ENCODE measurements at regions of chr19 and their contacts with region 1.

Region 1: DNA sequence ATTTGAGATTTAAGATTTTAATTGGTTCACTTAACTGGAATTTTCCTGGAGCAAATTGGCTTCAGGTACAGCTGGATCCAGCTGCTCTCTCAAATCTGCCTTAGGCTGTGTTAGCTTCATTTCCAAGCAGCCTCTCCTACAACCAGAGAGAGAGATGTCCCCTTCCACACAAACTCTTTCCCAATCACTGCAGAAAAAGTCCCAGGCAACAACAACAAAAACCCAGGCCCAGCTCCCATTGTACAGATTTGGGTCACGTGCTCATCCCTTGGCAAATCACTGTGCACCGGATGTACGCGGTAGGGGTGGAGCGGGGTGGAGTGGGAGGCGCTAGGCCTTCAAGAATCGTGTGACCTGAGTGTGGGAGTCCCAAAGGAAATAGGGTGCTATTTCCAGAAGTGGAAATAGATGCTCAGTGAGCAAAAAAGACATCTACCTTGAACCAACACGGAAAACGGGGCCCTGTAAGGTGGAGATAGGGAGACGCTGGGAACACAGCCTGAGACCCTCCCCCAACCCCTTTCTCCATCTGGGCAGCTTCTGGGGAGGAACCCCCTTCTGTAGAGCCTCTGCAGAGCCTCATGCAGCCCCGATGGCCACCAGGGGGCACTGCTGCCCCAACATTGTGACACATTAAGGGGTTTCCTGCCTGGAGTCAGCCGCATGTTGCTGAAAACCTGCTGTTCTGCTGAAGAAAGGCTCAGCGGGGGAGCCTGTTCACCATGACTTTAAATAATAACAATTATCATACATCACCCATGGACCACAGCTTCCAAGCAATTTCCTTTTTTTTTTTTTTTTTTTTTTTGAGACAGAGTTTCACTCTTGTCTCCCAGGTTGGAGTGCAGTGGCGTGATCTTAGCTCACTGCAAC is 25.4 kb downstream of the HPN start:
- DNase-seq: peak; percentile 89
- H3K4me3 ChIP-seq: no peak overlapping the region
- H3K27ac ChIP-seq: no peak overlapping the region
- H3K4me1 ChIP-seq: no peaks in the 10 kb centered on the region
- H3K27me3 ChIP-seq: no peaks in the 10 kb centered on the region
- CTCF ChIP-seq: peak; percentile 51 to 71 (median 66)
- EP300 ChIP-seq: no peak
- POLR2A ChIP-seq: no peak

Region 2: DNA sequence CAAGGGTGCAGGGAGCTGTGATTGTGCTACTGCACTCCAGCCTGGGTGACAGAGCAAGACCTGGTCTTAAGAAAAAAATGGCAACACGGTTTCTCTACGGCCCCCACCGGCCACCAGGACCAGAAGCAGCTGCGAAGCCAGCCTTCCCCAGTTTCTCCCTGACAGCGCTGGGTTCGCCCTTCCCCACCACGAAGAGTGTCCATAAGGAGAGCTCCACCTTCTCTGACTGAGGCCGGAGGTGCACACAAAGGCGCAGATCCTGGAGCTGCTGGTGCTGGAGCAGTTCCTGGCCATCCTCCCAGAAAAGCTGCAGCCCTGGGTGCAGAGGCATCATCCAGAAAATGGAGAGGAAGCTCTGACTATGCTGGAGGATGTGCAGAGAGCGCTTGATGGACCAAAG is 241.7 kb before region 1 on chr19:
- intact Hi-C with region 1: no loop called
- DNase-seq: no peak
- H3K4me3 ChIP-seq: no peak overlapping the region
- H3K27ac ChIP-seq: no peak overlapping the region
- H3K4me1 ChIP-seq: no peaks in the 10 kb centered on the region
- H3K27me3 ChIP-seq: no peaks in the 10 kb centered on the region
- CTCF ChIP-seq: no peak
- EP300 ChIP-seq: no peak
- POLR2A ChIP-seq: no peak

Region 3: DNA sequence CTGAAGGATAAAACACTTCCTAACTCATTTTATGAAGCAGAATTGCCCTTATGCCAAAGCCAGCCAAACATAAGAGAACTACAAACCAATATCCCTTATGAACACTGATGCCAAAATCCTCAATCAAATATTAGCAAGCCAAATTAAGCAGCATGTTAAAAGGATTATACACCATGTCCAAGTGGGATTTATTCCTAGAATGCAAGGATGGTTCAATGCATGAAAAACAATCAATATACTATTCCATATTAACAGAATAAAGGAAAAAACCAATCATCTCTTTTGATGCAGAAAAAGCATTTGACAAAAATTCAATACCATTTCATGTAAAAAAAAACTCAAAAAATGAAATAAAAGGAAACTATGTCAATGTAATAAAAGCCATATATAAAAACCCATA is 113.8 kb before region 1 on chr19:
- intact Hi-C with region 1: no loop called
- DNase-seq: no peak
- H3K4me3 ChIP-seq: no peak overlapping the region
- H3K27ac ChIP-seq: no peak overlapping the region
- H3K4me1 ChIP-seq: no peaks in the 10 kb centered on the region
- H3K27me3 ChIP-seq: no peaks in the 10 kb centered on the region
- CTCF ChIP-seq: no peak
- EP300 ChIP-seq: no peak
- POLR2A ChIP-seq: no peak

Region 4: GRCh38 chr19:35090506-35091237 is 23.7 kb after region 1 on chr19:
- intact Hi-C with region 1: loop called (anchors 2 kb)
- DNase-seq: no peak
- H3K4me3 ChIP-seq: no peak overlapping the region
- H3K27ac ChIP-seq: no peak overlapping the region
- H3K4me1 ChIP-seq: peaks cover 0 to 11% (median 7%) of the 10 kb centered on the region in 4 donors
- H3K27me3 ChIP-seq: peaks cover 0 to 27% (median 23%) of the 10 kb centered on the region in 3 donors
- CTCF ChIP-seq: peak in 2 of 4 experiments; percentile 41 to 61
- EP300 ChIP-seq: no peak
- POLR2A ChIP-seq: no peak

Region 5: GRCh38 chr19:35162471-35163326 is 95.8 kb after region 1 on chr19:
- intact Hi-C with region 1: no loop called
- DNase-seq: peak; percentile 27
- H3K4me3 ChIP-seq: no peak overlapping the region
- H3K27ac ChIP-seq: no peak overlapping the region
- H3K4me1 ChIP-seq: no peaks in the 10 kb centered on the region
- H3K27me3 ChIP-seq: peaks cover 0 to 5% (median under 1%) of the 10 kb centered on the region in 3 donors
- CTCF ChIP-seq: no peak
- EP300 ChIP-seq: no peak
- POLR2A ChIP-seq: no peak

Region 6: GRCh38 chr19:35518313-35518712 is 451.4 kb after region 1 on chr19:
- intact Hi-C with region 1: no loop called
- DNase-seq: no peak
- H3K4me3 ChIP-seq: no peak overlapping the region
- H3K27ac ChIP-seq: no peak overlapping the region
- H3K4me1 ChIP-seq: no peaks in the 10 kb centered on the region
- H3K27me3 ChIP-seq: peaks cover 0 to 20% (median 12%) of the 10 kb centered on the region in 3 donors
- CTCF ChIP-seq: no peak
- EP300 ChIP-seq: no peak
- POLR2A ChIP-seq: no peak

Measured in sigmoid colon (tissue), 7 donors.